ENCODE measurements at regions of chr7 and their contacts with region 1.

Region 1: GRCh38 chr7:116786791-116787443 is 75.5 kb upstream of the CAPZA2 start:
- DNase-seq: peak; percentile 58
- ATAC-seq: peak; percentile 99
- H3K4me3 ChIP-seq: no peak overlapping the region
- H3K27ac ChIP-seq: no peak overlapping the region
- H3K4me1 ChIP-seq: peaks cover 6% of the 10 kb centered on the region; the same call in 1 of the 2 replicates
- H3K27me3 ChIP-seq: no peaks in the 10 kb centered on the region; a peak in 1 of 4 replicates
- CTCF ChIP-seq: peak; percentile 65 to 78 (median 72)
- EP300 ChIP-seq: no peak
- POLR2A ChIP-seq: no peak
- RAD21 ChIP-seq: peak; percentile 80

Region 2: DNA sequence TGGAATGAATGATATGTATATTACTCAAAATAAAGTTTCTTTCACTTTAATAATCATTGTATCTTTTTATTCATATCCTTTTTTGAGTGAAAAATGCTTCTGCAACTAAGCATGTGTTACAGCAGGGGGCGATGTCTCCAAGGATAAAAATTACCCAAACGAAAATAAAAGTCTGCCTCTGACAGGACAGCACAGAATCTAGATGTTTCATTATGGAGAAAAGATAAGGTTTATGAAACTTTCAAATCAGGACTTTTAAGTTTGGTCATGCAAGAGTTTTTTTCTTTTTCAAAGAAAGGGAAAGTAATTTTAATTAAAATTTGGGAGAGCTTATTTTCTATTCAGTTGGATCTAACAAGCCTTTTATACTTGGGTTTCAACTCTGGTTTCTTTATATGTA is 528.2 kb before region 1 on chr7:
- CTCF ChIA-PET with region 1: interaction called, 3 read pairs
- POLR2A ChIA-PET with region 1: no interaction called
- RAD21 ChIA-PET with region 1: no interaction called
- SMC1A ChIA-PET with region 1: interaction called, 4 read pairs
- in situ Hi-C with region 1: loop called (anchors 10 kb)
- intact Hi-C with region 1: loop called (anchors 2 kb)
- DNase-seq: peak; percentile 23
- ATAC-seq: peak; percentile 59
- H3K4me3 ChIP-seq: no peak overlapping the region
- H3K27ac ChIP-seq: no peak overlapping the region
- H3K4me1 ChIP-seq: no peaks in the 10 kb centered on the region
- H3K27me3 ChIP-seq: no peaks in the 10 kb centered on the region
- CTCF ChIP-seq: peak; percentile 53 to 76 (median 65); a peak in 5 of 6 replicates
- EP300 ChIP-seq: no peak
- POLR2A ChIP-seq: no peak
- RAD21 ChIP-seq: peak; percentile 92

Region 3: GRCh38 chr7:116560021-116560970 is 226.6 kb before region 1 on chr7:
- CTCF ChIA-PET with region 1: no interaction called
- POLR2A ChIA-PET with region 1: no interaction called
- RAD21 ChIA-PET with region 1: no interaction called
- SMC1A ChIA-PET with region 1: no interaction called
- in situ Hi-C with region 1: no loop called
- intact Hi-C with region 1: no loop called
- DNase-seq: no peak
- ATAC-seq: no peak
- H3K4me3 ChIP-seq: no peak overlapping the region
- H3K27ac ChIP-seq: no peak overlapping the region
- H3K4me1 ChIP-seq: no peaks in the 10 kb centered on the region
- H3K27me3 ChIP-seq: no peaks in the 10 kb centered on the region
- CTCF ChIP-seq: no peak
- EP300 ChIP-seq: no peak
- POLR2A ChIP-seq: no peak
- RAD21 ChIP-seq: no peak

Region 4: GRCh38 chr7:116683786-116684185 is 103.1 kb before region 1 on chr7:
- CTCF ChIA-PET with region 1: no interaction called
- POLR2A ChIA-PET with region 1: no interaction called
- RAD21 ChIA-PET with region 1: no interaction called
- SMC1A ChIA-PET with region 1: no interaction called
- in situ Hi-C with region 1: no loop called
- intact Hi-C with region 1: loop called (anchors 5 kb)
- DNase-seq: peak; percentile 58
- ATAC-seq: peak; percentile 100
- H3K4me3 ChIP-seq: no peak overlapping the region
- H3K27ac ChIP-seq: no peak overlapping the region
- H3K4me1 ChIP-seq: no peaks in the 10 kb centered on the region
- H3K27me3 ChIP-seq: peaks cover 2 to 14% of the 10 kb centered on the region in 2 experiments; a peak in 3 of 4 replicates
- CTCF ChIP-seq: no peak
- EP300 ChIP-seq: peak in 1 of 2 experiments; percentile 64; a peak in 1 of 4 replicates
- POLR2A ChIP-seq: no peak
- RAD21 ChIP-seq: no peak

Region 5: GRCh38 chr7:116801092-116801727 is 14.3 kb after region 1 on chr7:
- CTCF ChIA-PET with region 1: no interaction called
- POLR2A ChIA-PET with region 1: no interaction called
- RAD21 ChIA-PET with region 1: no interaction called
- SMC1A ChIA-PET with region 1: no interaction called
- in situ Hi-C with region 1: no loop called
- intact Hi-C with region 1: no loop called
- DNase-seq: no peak
- ATAC-seq: no peak
- H3K4me3 ChIP-seq: no peak overlapping the region
- H3K27ac ChIP-seq: no peak overlapping the region
- H3K4me1 ChIP-seq: no peaks in the 10 kb centered on the region
- H3K27me3 ChIP-seq: no peaks in the 10 kb centered on the region
- CTCF ChIP-seq: no peak
- EP300 ChIP-seq: no peak
- POLR2A ChIP-seq: no peak
- RAD21 ChIP-seq: no peak

Region 6: GRCh38 chr7:116829041-116829440 is 42.1 kb after region 1 on chr7:
- CTCF ChIA-PET with region 1: no interaction called
- POLR2A ChIA-PET with region 1: no interaction called
- RAD21 ChIA-PET with region 1: no interaction called
- SMC1A ChIA-PET with region 1: no interaction called
- in situ Hi-C with region 1: no loop called
- intact Hi-C with region 1: no loop called
- DNase-seq: no peak
- ATAC-seq: no peak
- H3K4me3 ChIP-seq: no peak overlapping the region
- H3K27ac ChIP-seq: no peak overlapping the region
- H3K4me1 ChIP-seq: no peaks in the 10 kb centered on the region
- H3K27me3 ChIP-seq: no peaks in the 10 kb centered on the region; a peak in 1 of 4 replicates
- CTCF ChIP-seq: no peak
- EP300 ChIP-seq: no peak
- POLR2A ChIP-seq: no peak
- RAD21 ChIP-seq: no peak

Region 7: GRCh38 chr7:117892821-117893220 is 1105.9 kb after region 1 on chr7:
- CTCF ChIA-PET with region 1: no interaction called
- POLR2A ChIA-PET with region 1: interaction called, 12 read pairs
- RAD21 ChIA-PET with region 1: no interaction called
- SMC1A ChIA-PET with region 1: no interaction called
- in situ Hi-C with region 1: no loop called
- intact Hi-C with region 1: no loop called
- DNase-seq: no peak
- ATAC-seq: no peak
- H3K4me3 ChIP-seq: no peak overlapping the region
- H3K27ac ChIP-seq: no peak overlapping the region
- H3K4me1 ChIP-seq: no peaks in the 10 kb centered on the region
- H3K27me3 ChIP-seq: 0 out of 4 replicates have a peak, but pooled peaks cover 0 to 1% of the 10 kb centered on the region in 2 experiments
- CTCF ChIP-seq: no peak
- EP300 ChIP-seq: no peak
- POLR2A ChIP-seq: no peak
- RAD21 ChIP-seq: no peak

Measured in GM12878 (cell line).